Transverse colon (tissue), 4 donors: ENCODE measurements at regions of chrX and their contacts with region 1.

Region 1: DNA sequence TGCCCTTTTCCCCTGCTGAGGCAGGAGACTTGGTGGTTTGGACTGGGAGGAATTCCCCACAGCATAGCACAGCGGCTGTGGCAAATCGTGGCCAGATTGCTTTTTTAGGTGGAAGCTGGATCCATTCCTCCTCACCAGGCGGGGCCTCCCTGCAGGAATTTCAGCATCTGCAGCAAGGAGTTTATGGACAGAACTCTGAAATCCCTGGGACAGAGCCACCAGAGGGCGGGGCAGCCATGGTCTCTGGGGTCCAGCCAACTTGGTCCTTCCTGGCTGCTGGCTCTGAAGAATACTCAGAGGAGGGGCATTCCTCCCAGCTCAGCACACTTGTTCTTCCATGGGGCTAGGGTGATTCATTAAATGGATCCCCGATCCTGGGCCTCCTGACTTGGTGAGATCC is 794.3 kb downstream of the SH3BGRL start:
- DNase-seq: no peak
- H3K4me3 ChIP-seq: no peak overlapping the region
- H3K27ac ChIP-seq: no peak overlapping the region
- H3K4me1 ChIP-seq: no peaks in the 10 kb centered on the region
- H3K27me3 ChIP-seq: no peaks in the 10 kb centered on the region
- CTCF ChIP-seq: no peak
- EP300 ChIP-seq: no peak
- POLR2A ChIP-seq: no peak

Region 2: GRCh38 chrX:80246271-80246670 is 1749.9 kb before region 1 on chrX:
- in situ Hi-C with region 1: no loop called
- intact Hi-C with region 1: loop called (anchors 5 kb)
- DNase-seq: no peak
- H3K4me3 ChIP-seq: no peak overlapping the region
- H3K27ac ChIP-seq: no peak overlapping the region
- H3K4me1 ChIP-seq: no peaks in the 10 kb centered on the region
- H3K27me3 ChIP-seq: no peaks in the 10 kb centered on the region
- CTCF ChIP-seq: no peak
- EP300 ChIP-seq: no peak
- POLR2A ChIP-seq: no peak

Region 3: DNA sequence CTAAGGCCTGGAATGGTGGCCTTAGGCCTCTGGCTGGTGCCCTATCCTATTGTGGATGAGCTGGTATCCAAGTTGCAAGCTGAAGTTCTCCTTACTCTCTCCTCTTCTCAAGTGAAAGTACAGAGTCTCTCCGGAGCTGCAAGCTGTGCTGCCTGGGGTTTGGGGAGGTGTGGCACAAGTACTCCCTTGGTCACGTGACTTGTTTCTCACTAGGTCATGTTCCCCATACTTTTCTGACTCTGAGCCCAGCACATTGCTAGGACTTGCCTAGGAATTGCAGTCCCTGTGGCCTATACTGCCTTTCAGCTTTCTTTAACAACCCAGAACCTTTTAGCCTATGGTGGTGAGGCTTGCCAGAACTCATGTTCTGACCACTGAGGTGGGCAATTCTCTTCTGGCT is 177.8 kb before region 1 on chrX:
- in situ Hi-C with region 1: no loop called
- intact Hi-C with region 1: no loop called
- DNase-seq: no peak
- H3K4me3 ChIP-seq: no peak overlapping the region
- H3K27ac ChIP-seq: no peak overlapping the region
- H3K4me1 ChIP-seq: no peaks in the 10 kb centered on the region
- H3K27me3 ChIP-seq: no peaks in the 10 kb centered on the region
- CTCF ChIP-seq: no peak
- EP300 ChIP-seq: no peak
- POLR2A ChIP-seq: no peak

Region 4: GRCh38 chrX:82058728-82059127 is 62.6 kb after region 1 on chrX:
- in situ Hi-C with region 1: no loop called
- intact Hi-C with region 1: no loop called
- DNase-seq: no peak
- H3K4me3 ChIP-seq: no peak overlapping the region
- H3K27ac ChIP-seq: no peak overlapping the region
- H3K4me1 ChIP-seq: no peaks in the 10 kb centered on the region
- H3K27me3 ChIP-seq: no peaks in the 10 kb centered on the region
- CTCF ChIP-seq: no peak
- EP300 ChIP-seq: no peak
- POLR2A ChIP-seq: no peak